ENCODE measurements at regions of chr12 and their contacts with region 1.

Region 1: DNA sequence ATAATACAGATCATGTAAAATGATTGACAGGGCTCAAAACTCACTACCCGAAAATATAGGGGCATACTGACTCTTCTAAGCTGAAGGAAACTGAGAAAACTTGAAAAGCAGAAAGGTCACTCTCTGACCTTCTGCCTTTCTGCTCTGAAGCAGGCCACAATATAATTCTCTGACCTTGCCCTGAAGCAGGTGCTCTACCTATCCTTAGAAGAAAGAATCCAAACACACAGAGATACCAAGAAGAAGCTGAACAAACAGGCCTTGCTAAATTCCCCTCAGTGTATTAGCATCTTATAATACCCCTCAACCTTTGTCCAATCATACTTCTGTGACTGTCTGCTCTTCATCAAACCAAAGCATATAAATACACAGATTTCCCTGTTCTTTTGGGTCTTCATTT is 60.9 kb upstream of the BBS10 start:
- DNase-seq: no peak
- ATAC-seq: no peak
- H3K4me3 Mint-ChIP-seq: no peak overlapping the region
- H3K27ac Mint-ChIP-seq: no peak overlapping the region
- H3K4me1 Mint-ChIP-seq: peaks cover 5% of the 10 kb centered on the region
- H3K27me3 Mint-ChIP-seq: no peaks in the 10 kb centered on the region
- CTCF ChIP-seq: no peak

Region 2: GRCh38 chr12:75345531-75345930 is 1063.5 kb before region 1 on chr12:
- CTCF ChIA-PET with region 1: no interaction called
- POLR2A ChIA-PET with region 1: no interaction called
- intact Hi-C with region 1: no loop called
- DNase-seq: no peak
- ATAC-seq: no peak
- H3K4me3 Mint-ChIP-seq: no peak overlapping the region
- H3K27ac Mint-ChIP-seq: no peak overlapping the region
- H3K4me1 Mint-ChIP-seq: no peaks in the 10 kb centered on the region
- H3K27me3 Mint-ChIP-seq: no peaks in the 10 kb centered on the region
- CTCF ChIP-seq: no peak

Region 3: DNA sequence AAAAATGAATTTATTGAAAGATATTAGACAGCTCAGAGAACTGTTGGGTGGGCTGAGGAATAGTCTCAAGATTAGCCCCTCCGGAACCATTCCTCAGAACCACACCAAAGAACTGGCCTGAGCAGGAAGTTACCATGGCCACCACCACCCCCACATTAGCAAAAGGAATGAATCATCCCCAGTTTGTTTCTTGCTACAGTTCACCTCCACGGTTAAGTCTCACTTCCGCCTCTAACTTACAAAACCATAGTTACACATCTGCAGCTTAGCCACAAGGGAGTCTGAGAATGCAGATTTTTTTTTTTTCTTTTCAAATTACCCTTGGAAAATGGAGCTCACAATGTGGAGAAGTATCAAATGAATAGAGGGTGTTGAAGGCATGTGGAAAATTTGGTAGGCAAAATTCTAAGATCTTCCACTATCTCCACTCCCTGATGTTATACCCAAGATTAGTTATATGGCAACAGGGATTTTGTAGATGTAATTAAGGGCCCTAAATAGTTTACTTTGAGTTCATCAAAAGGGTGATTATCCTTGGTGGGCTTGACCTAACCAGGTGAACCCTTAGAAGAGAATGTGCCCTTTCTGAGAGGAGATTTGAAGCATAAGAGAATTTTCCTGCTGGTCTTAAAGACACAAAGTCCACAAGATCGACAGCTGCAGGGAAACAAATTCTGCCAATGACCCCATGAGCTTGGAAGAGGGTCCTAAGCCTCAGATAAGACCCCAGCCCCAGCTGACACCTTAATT is 767.9 kb before region 1 on chr12:
- CTCF ChIA-PET with region 1: no interaction called
- POLR2A ChIA-PET with region 1: no interaction called
- intact Hi-C with region 1: no loop called
- DNase-seq: no peak
- ATAC-seq: peak; percentile 96
- H3K4me3 Mint-ChIP-seq: peak overlapping the region; percentile 26
- H3K27ac Mint-ChIP-seq: peak overlapping the region; percentile 51
- H3K4me1 Mint-ChIP-seq: peaks cover 33% of the 10 kb centered on the region
- H3K27me3 Mint-ChIP-seq: peaks cover under 1% of the 10 kb centered on the region
- CTCF ChIP-seq: no peak

Region 4: GRCh38 chr12:76398106-76398505 is 11.0 kb before region 1 on chr12:
- CTCF ChIA-PET with region 1: no interaction called
- POLR2A ChIA-PET with region 1: no interaction called
- intact Hi-C with region 1: no loop called
- DNase-seq: no peak
- ATAC-seq: no peak
- H3K4me3 Mint-ChIP-seq: no peak overlapping the region
- H3K27ac Mint-ChIP-seq: no peak overlapping the region
- H3K4me1 Mint-ChIP-seq: no peaks in the 10 kb centered on the region
- H3K27me3 Mint-ChIP-seq: no peaks in the 10 kb centered on the region
- CTCF ChIP-seq: no peak

Region 5: GRCh38 chr12:76422543-76423438 is 13.7 kb after region 1 on chr12:
- CTCF ChIA-PET with region 1: no interaction called
- POLR2A ChIA-PET with region 1: no interaction called
- intact Hi-C with region 1: loop called (anchors 2 kb)
- DNase-seq: no peak
- ATAC-seq: no peak
- H3K4me3 Mint-ChIP-seq: no peak overlapping the region
- H3K27ac Mint-ChIP-seq: no peak overlapping the region
- H3K4me1 Mint-ChIP-seq: peaks cover 11% of the 10 kb centered on the region
- H3K27me3 Mint-ChIP-seq: no peaks in the 10 kb centered on the region
- CTCF ChIP-seq: no peak